ENCODE measurements at regions of chr6 and their contacts with region 1.

Region 1: DNA sequence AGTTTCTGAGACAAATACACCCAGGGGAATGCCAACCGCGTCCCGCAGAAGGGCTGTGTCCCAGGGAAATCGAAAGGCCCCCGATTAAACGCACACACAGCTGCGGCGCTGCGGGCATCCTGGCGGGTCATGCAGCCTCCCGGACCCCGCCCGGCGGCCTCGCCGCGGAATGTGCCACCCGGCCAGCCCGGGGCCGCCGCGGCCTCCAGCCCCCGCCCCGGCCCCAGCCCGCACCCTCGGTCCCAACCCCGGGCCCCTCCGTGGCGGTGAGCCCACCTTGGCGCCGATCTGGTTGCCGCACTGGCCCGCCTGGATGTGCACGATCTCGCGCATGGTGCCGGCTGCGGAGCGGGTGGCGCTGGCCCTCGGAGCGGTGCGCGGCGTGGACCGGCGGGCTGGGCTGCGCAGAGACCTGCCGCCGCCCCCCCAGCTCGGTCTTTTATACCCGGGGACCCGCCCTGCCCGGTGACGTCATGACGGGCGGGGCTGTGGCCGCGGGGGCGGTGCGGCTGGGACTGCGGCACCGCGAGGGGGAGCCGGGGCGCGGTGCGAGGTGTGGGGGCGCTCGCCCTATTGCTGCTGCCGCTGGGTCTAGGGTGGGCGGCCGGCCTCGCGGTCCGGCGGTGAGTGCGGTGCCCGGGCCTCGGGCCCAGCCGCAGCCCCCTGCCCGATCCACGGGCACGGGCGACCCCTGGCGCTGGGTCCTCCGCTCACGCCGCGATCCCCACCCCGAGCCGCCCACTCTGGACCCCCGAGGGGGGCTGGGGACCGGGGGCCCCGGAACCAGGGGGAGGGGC is at the start of gene TUBB2A:
- DNase-seq: peak in 1 of 2 donors; percentile 91
- H3K4me3 ChIP-seq: peak within 1 kb of the TSS; percentile 70 to 99
- H3K27ac ChIP-seq: peak within 1 kb of the TSS; percentile 99
- H3K4me1 ChIP-seq: peaks cover 0 to 3% of the 10 kb centered on the region in 2 donors
- H3K27me3 ChIP-seq: no peaks in the 10 kb centered on the region
- CTCF ChIP-seq: peak; percentile 22 to 62 (median 36)
- total RNA-seq, gene TUBB2A: 121 TPM

Region 2: DNA sequence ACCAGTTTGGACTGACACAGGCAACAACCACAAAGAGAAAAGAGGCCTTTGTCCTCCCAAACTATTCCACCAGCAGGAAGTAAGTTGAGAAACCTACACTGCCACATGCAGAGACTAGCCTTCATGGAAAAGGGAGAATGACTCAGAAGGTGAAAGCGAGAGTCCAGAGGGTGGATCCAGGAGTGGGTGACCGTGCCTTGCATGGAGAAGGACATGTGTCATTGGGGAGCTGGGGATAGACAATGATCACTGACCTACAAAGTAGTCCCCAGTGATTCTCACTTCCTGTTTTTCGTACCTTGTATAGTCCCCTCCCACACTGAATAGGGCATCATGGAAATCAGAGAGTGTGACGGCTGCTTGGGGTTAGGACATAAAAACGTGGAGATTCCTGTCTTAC is 498.5 kb before region 1 on chr6:
- intact Hi-C with region 1: no loop called
- DNase-seq: no peak
- H3K4me3 ChIP-seq: no peak overlapping the region
- H3K27ac ChIP-seq: no peak overlapping the region
- H3K4me1 ChIP-seq: no peaks in the 10 kb centered on the region
- H3K27me3 ChIP-seq: no peaks in the 10 kb centered on the region
- CTCF ChIP-seq: no peak

Region 3: GRCh38 chr6:3068329-3069214 is 88.8 kb before region 1 on chr6 and contains the start of gene RIPK1:
- intact Hi-C with region 1: loop called (anchors 1 kb)
- DNase-seq: peak; percentile 74 to 95
- H3K4me3 ChIP-seq: peak within 1 kb of the TSS; percentile 77 to 85
- H3K27ac ChIP-seq: peak within 1 kb of the TSS; percentile 96 to 98
- H3K4me1 ChIP-seq: peaks cover 8 to 19% of the 10 kb centered on the region in 2 donors
- H3K27me3 ChIP-seq: no peaks in the 10 kb centered on the region
- CTCF ChIP-seq: peak in 2 of 3 experiments; percentile 26 to 46
- total RNA-seq, gene RIPK1: 20.1 TPM

Region 4: DNA sequence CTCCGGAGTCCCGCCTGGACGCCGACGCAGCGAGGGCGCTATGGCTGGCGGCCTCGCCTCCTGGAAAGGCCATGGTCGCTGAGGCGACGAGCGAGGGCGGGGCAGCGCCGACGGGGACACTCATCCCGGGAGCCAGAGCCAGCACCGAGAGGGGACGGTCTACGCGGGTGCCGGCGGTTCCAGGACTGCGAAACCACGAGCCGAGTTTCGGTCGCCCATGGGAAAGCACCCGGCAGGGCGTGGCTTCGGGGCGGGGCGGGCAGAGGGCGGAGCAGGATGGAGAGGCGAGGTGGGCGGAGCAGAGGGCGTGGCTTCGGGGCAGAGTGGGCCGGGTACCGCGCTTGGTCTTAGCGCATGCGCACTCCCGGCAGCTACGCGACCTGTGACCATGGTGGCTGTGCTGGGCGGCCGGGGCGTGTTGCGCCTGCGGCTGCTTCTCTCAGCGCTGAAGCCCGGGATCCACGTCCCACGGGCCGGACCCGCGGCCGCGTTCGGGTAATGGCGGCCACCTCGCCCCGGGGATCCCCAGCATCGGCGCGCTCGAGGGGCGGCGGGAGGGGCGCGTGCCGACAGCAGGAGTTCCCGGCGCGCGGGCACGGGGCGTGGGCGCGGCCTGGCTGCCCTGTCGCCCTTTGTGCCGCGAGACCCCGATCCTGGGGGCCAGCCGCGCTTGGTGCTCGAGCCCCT is 38.8 kb before region 1 on chr6 and contains the start of gene BPHL:
- intact Hi-C with region 1: loop called (anchors 2 kb)
- DNase-seq: peak; percentile 75 to 97
- H3K4me3 ChIP-seq: peak within 1 kb of the TSS; percentile 75 to 84
- H3K27ac ChIP-seq: peak within 1 kb of the TSS; percentile 81 to 93
- H3K4me1 ChIP-seq: peaks cover 0 to 5% of the 10 kb centered on the region in 2 donors
- H3K27me3 ChIP-seq: no peaks in the 10 kb centered on the region
- CTCF ChIP-seq: no peak
- total RNA-seq, gene BPHL: 7.7 TPM

Region 5: DNA sequence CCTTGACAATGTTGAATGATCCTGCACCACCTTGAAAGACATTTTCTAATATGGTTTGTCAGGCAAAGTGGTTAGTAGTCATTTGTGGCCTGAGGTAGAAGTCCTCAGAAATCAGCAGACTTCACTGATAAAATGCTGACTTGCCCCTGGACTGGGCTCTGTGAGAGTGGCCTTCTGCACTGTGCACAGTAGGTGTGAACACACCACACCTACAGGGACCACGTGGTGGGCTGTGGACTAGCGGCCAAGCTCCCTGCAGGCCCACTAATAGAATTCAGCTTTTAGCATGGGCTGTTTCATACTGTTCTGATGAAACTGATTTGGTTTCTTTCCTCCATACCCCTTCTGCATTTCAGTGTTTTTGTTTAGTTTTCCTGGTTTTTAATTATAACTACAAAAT is 31.5 kb before region 1 on chr6:
- intact Hi-C with region 1: loop called (anchors 2 kb)
- DNase-seq: no peak
- H3K4me3 ChIP-seq: no peak overlapping the region
- H3K27ac ChIP-seq: no peak overlapping the region
- H3K4me1 ChIP-seq: no peaks in the 10 kb centered on the region
- H3K27me3 ChIP-seq: no peaks in the 10 kb centered on the region
- CTCF ChIP-seq: no peak

Region 6: GRCh38 chr6:3209114-3210023 is 52.0 kb after region 1 on chr6:
- intact Hi-C with region 1: loop called (anchors 2 kb)
- DNase-seq: peak in 1 of 2 donors; percentile 70
- H3K4me3 ChIP-seq: no peak overlapping the region
- H3K27ac ChIP-seq: peak overlapping the region; percentile 15 to 64
- H3K4me1 ChIP-seq: peaks cover 3 to 27% of the 10 kb centered on the region in 2 donors
- H3K27me3 ChIP-seq: no peaks in the 10 kb centered on the region
- CTCF ChIP-seq: no peak

Region 7: GRCh38 chr6:3251462-3252314 is 94.4 kb after region 1 on chr6:
- intact Hi-C with region 1: loop called (anchors 1 kb)
- DNase-seq: peak in 1 of 2 donors; percentile 91
- H3K4me3 ChIP-seq: no peak overlapping the region
- H3K27ac ChIP-seq: no peak overlapping the region
- H3K4me1 ChIP-seq: peaks cover 0 to 4% of the 10 kb centered on the region in 2 donors
- H3K27me3 ChIP-seq: no peaks in the 10 kb centered on the region
- CTCF ChIP-seq: peak; percentile 89 to 97 (median 96)

Region 8: GRCh38 chr6:4018172-4018905 is 861.0 kb after region 1 on chr6:
- intact Hi-C with region 1: loop called (anchors 5 kb)
- DNase-seq: peak; percentile 81 to 96
- H3K4me3 ChIP-seq: peak overlapping the region; percentile 78 to 81
- H3K27ac ChIP-seq: peak overlapping the region; percentile 97 to 99
- H3K4me1 ChIP-seq: peaks cover 7 to 36% of the 10 kb centered on the region in 2 donors
- H3K27me3 ChIP-seq: no peaks in the 10 kb centered on the region
- CTCF ChIP-seq: peak; percentile 43 to 48 (median 43)

Measured in ascending aorta (tissue), 2 donors.